Head of caudate nucleus (tissue), 42 donors: ENCODE measurements at regions of chr2 and their contacts with region 1.

Region 1: DNA sequence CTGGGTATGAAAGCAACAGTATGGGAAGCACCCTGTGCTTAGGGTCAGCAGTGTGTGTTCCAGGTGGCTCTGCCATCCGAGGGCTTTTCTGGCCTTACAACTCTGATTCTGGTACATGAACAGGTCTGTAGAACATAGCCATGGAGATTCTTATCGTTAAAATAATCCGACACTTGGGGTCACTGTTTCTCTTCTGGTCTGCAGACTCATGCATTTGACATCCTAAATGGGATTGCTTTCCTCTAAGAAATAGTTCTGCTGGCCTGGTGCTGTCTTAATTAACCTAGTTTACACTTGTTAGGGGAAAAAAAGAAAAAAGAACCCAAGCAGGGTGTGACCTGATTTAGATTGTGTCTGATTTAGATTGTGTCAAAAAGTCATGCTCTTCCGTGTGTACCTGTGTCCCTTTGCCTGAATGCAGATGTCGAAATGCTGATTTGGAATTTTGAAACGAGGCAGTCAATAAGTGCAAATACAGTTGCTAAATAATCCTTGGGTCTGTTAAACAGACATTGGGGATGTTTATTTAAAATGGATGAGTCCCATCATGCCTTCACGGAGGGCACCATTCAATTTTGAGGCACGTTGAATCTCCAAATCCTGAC is 59.6 kb downstream of the TRPM8 start:
- DNase-seq: peak in 5 of 42 donors; percentile 12 to 56 (median 22)

Region 2: GRCh38 chr2:233501198-233502076 is 475.4 kb before region 1 on chr2:
- intact Hi-C with region 1: no loop called
- DNase-seq: peak in 17 of 42 donors; percentile 23 to 74 (median 51)

Region 3: DNA sequence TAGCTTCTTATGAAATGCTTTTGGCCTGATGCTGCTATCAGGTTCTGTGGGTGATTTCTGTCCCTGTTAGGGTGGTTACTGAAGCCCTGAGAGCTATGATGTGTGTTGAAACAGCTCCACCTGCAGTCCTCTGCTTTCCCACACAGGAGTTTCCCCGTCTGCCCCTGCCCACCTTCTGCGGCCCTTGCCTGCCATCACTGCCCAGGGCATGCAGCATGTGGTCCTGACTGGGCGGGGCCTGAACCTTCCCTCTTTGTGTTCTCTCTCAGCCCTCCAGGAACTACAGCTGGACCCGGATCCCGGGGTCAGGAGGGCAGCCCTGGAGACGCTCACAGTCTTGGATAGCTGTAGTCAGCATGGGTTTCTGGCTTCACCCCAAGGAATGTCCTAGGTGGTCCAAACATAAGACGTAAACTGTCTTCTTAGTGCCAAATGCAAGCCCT is 143.9 kb before region 1 on chr2:
- intact Hi-C with region 1: no loop called
- DNase-seq: peak in 7 of 42 donors; percentile 2 to 30 (median 11)

Region 4: DNA sequence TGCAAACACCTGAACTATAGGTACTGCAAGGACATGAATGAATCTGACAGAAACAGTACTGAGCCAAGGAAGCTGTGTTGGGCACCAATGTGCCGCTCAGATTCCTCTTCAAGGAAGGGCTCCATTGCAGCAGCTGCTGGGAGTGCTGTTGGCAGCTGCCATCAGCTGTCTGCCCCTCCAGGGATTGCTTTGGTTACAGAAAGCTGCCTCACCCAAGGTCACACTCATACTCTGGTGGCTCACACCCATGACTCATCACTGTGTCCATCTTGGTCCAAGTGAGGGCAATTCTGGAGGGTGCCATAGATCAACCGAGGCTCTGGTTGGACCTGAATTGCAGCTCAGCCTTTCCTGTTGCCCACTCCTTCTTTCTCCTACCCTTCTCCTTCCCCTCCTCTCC is 84.0 kb before region 1 on chr2:
- intact Hi-C with region 1: no loop called
- DNase-seq: no peak

Region 5: GRCh38 chr2:234091432-234091879 is 114.7 kb after region 1 on chr2:
- intact Hi-C with region 1: no loop called
- DNase-seq: peak in 1 of 42 donors; percentile 38

Region 6: GRCh38 chr2:234544659-234545611 is 568.1 kb after region 1 on chr2:
- intact Hi-C with region 1: loop called (anchors 10 kb)
- DNase-seq: peak; percentile 28 to 91 (median 77)